ENCODE measurements at regions of chr14 and their contacts with region 1.

Region 1: DNA sequence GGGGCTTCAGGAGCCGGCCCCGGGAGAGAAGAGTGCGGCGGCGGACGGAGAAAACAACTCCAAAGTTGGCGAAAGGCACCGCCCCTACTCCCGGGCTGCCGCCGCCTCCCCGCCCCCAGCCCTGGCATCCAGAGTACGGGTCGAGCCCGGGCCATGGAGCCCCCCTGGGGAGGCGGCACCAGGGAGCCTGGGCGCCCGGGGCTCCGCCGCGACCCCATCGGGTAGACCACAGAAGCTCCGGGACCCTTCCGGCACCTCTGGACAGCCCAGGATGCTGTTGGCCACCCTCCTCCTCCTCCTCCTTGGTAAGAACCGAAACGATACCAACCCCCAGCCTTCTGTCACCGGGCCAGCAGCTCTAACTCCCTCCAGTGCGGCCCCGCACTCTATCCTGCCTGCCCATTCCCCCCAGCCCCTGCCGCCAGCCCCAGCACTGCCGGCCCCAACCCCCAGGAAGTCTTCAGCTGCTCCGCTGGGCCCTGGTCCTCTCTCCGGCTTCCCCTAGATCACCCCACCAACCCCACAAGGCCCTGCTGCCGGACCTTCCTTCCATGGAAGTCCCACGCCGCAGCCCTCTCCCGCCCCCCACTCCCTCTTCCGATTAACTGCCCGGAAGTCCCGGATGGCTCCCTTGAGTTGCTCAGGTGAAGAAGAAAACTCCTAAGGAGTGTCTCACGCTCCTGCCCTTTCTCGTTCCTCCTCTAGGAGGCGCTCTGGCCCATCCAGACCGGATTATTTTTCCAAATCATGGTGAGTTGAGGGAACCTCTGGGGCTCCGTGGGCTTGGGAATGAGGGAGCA is 693 bp downstream of the LRP10 start:
- DNase-seq: peak; percentile 76 to 89 (median 85)
- ATAC-seq: peak; percentile 62 to 78 (median 72)
- H3K4me3 ChIP-seq: peak overlapping the region; percentile 77 to 97 (median 89)
- H3K27ac ChIP-seq: peak overlapping the region; percentile 94 to 99 (median 98)
- H3K4me1 ChIP-seq: peaks cover 9 to 21% (median 12%) of the 10 kb centered on the region in 3 donors
- H3K27me3 ChIP-seq: no peaks in the 10 kb centered on the region
- CTCF ChIP-seq: peak; percentile 86 to 94 (median 90)

Region 2: DNA sequence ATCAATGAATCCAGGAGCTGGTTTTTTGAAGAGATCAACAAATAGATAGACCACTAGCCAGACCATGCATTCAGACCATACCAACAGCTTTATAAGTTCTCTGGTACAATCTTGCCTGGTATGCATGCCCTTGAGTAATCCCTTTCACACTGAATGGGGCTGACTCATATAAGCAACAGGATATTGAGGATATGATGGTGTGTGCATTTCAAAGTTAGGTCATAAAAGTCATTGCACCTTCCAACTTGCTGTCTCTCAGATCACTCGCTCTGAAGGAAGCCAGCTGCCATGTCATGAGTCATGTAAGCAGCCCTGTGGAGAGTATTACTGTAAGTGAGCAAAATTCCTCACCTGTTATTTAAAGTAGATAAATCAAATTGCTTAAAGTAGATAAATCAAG is 183.0 kb before region 1 on chr14:
- intact Hi-C with region 1: no loop called
- DNase-seq: peak in 1 of 6 donors; percentile 25
- ATAC-seq: peak in 3 of 4 donors; percentile 42 to 83 (median 53)
- H3K4me3 ChIP-seq: no peak overlapping the region
- H3K27ac ChIP-seq: no peak overlapping the region
- H3K4me1 ChIP-seq: no peaks in the 10 kb centered on the region
- H3K27me3 ChIP-seq: no peaks in the 10 kb centered on the region
- CTCF ChIP-seq: no peak

Region 3: DNA sequence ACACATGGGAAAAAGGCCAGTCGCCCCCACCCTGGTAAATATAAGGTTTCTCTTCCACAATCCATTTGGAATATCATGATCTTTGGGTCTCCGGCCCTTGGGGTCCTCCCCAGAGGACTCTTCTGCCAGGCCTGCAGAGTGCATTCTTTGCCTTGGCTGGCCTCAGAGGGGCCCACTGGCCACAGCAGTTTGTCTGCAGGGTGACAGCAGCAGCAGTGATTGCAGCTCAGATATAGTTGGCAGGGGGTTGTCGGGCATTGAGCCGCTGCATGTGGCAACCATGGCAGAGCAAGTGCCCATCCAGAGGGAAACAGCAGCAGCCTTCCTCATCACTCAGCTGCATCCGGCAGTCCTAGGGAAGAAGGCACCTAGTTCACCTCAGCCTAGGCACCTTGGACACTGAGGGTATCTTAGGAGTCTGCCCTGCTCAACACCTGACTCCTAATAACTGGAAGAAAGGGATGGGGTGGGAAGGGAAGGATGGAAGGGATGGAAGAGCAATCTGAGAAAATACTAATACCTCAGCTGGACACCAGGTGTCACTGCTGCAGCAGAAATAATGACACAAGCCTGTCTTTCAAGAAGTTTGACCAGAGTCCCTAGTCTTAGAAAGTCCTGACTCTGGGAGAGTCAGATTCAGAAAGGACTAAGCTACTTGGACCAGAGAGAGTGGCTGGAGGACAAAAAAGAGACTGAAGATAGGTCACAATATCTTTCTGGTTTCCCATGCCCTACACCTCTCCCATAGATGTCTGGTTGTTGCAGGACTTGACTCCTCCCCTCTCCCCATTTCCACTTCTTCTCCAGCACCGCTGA is 101.2 kb after region 1 on chr14:
- intact Hi-C with region 1: loop called in 1 of 3 experiments (anchors 10 kb)
- DNase-seq: peak in 1 of 6 donors; percentile 61
- ATAC-seq: peak; percentile 22 to 66 (median 58)
- H3K4me3 ChIP-seq: no peak overlapping the region
- H3K27ac ChIP-seq: no peak overlapping the region
- H3K4me1 ChIP-seq: peaks cover 18 to 23% (median 22%) of the 10 kb centered on the region in 3 donors
- H3K27me3 ChIP-seq: no peaks in the 10 kb centered on the region
- CTCF ChIP-seq: peak; percentile 34 to 55 (median 46)

Measured in pancreas (tissue), 10 donors.